Thyroid gland (tissue), 4 donors: ENCODE measurements at regions of chr4 and their contacts with region 1.

Region 1: GRCh38 chr4:2412885-2413716 is 5.3 kb downstream of the ZFYVE28 start:
- DNase-seq: peak; percentile 96
- H3K4me3 ChIP-seq: peak overlapping the region in 2 of 3 donors; percentile 6 to 24
- H3K27ac ChIP-seq: peak overlapping the region; percentile 22 to 81 (median 66)
- H3K4me1 ChIP-seq: peaks cover 23 to 47% of the 10 kb centered on the region in 2 donors
- H3K27me3 ChIP-seq: no peaks in the 10 kb centered on the region
- CTCF ChIP-seq: peak in 4 of 6 experiments; percentile 43 to 52 (median 48)
- POLR2A ChIP-seq: peak in 1 of 2 donors; percentile 60

Region 2: DNA sequence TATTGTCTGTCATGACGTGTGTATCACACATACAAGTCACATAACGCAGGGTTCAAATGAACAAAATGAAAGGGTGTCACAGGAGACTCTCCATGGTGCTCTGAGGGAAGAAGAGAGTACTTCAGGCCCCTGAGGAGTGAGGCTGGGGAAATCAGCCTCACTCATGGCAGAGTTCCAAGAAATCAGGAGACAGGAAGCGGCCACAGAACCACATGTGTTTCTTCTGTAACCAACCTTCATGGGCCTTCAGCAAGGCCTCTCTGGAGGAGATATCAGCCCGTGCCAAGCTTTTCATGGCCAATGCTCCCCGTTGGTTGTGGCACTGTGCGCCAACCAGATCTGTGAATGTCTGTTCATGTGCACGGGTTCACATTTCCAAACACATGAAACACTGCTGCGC is 278.0 kb before region 1 on chr4:
- intact Hi-C with region 1: no loop called
- DNase-seq: peak in 1 of 2 donors; percentile 30
- H3K4me3 ChIP-seq: no peak overlapping the region
- H3K27ac ChIP-seq: no peak overlapping the region
- H3K4me1 ChIP-seq: no peaks in the 10 kb centered on the region
- H3K27me3 ChIP-seq: no peaks in the 10 kb centered on the region
- CTCF ChIP-seq: no peak
- POLR2A ChIP-seq: no peak

Region 3: GRCh38 chr4:2241410-2242353 is 171.4 kb before region 1 on chr4 and contains the starts of genes HAUS3 and POLN:
- intact Hi-C with region 1: loop called (anchors 5 kb)
- DNase-seq: peak; percentile 96 to 98
- H3K4me3 ChIP-seq: peak within 1 kb of the TSS; percentile 77 to 98 (median 95)
- H3K27ac ChIP-seq: peak within 1 kb of the TSS; percentile 22 to 50 (median 34)
- H3K4me1 ChIP-seq: peaks cover 12 to 37% of the 10 kb centered on the region in 2 donors
- H3K27me3 ChIP-seq: no peaks in the 10 kb centered on the region
- CTCF ChIP-seq: no peak
- POLR2A ChIP-seq: peak in 1 of 2 donors; percentile 90
- total RNA-seq, gene HAUS3: 13.0 to 30.0 (median 17.0) TPM
- total RNA-seq, gene POLN: 1.5 to 5.4 (median 3.0) TPM